GM12878 (cell line): ENCODE measurements at regions of chrX and their contacts with region 1.

Region 1: GRCh38 chrX:93538575-93538974 is 134.8 kb downstream of the NAP1L3 start:
- DNase-seq: no peak
- ATAC-seq: no peak
- H3K4me3 ChIP-seq: no peak overlapping the region
- H3K27ac ChIP-seq: no peak overlapping the region
- H3K4me1 ChIP-seq: no peaks in the 10 kb centered on the region
- H3K27me3 ChIP-seq: no peaks in the 10 kb centered on the region
- CTCF ChIP-seq: peak in 1 of 3 experiments; percentile 12; a peak in 1 of 6 replicates
- EP300 ChIP-seq: no peak
- POLR2A ChIP-seq: no peak
- RAD21 ChIP-seq: peak; percentile 47

Region 2: DNA sequence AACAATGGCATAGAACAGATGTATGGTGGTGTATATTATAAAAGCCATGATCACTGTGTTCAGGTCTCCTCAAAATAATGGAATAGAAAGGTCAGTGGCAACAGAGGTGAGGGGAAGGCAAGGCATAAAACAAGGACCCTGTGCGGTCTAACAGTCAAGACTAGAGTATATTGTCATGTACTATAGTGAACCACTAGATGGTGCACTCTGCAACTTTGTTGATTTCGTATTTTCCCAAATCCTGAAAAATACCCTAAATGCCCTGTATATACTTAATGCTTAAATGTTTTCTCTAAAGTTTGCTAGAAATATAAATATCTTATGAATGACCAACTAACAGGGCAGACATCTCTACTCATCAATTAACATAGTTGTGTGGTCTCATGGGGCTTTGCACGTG is 1306.4 kb before region 1 on chrX:
- CTCF ChIA-PET with region 1: interaction called, 4 read pairs
- POLR2A ChIA-PET with region 1: no interaction called
- RAD21 ChIA-PET with region 1: no interaction called
- SMC1A ChIA-PET with region 1: no interaction called
- in situ Hi-C with region 1: no loop called
- intact Hi-C with region 1: loop called (anchors 5 kb)
- DNase-seq: no peak
- ATAC-seq: peak; percentile 56
- H3K4me3 ChIP-seq: no peak overlapping the region
- H3K27ac ChIP-seq: no peak overlapping the region
- H3K4me1 ChIP-seq: no peaks in the 10 kb centered on the region
- H3K27me3 ChIP-seq: no peaks in the 10 kb centered on the region
- CTCF ChIP-seq: peak in 2 of 3 experiments; percentile 19 to 24; a peak in 3 of 6 replicates
- EP300 ChIP-seq: no peak
- POLR2A ChIP-seq: no peak
- RAD21 ChIP-seq: 0 out of 2 replicates have a peak, but pooled peaks have one; percentile 12

Region 3: DNA sequence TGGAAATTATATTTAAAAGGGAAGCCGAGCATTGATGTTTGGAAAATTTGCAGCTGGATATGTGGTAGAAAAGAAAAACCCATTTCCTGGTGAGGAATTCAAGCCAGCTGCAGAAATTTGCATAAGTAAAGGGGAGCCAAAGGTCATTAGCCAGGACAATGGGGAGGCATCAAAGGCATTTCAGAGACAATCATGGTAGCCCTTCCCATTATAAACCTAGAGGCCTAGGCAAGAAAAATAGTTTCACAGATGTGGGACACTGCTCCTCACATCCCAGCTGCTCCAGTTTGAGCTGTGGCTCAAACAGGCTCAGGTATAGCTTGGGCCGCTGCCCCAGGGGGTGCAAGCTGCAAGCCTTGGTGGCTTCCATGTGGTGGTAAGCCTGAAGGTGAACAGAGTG is 99.0 kb after region 1 on chrX:
- CTCF ChIA-PET with region 1: no interaction called
- POLR2A ChIA-PET with region 1: no interaction called
- RAD21 ChIA-PET with region 1: no interaction called
- SMC1A ChIA-PET with region 1: no interaction called
- in situ Hi-C with region 1: no loop called
- intact Hi-C with region 1: no loop called
- DNase-seq: no peak
- ATAC-seq: no peak
- H3K4me3 ChIP-seq: no peak overlapping the region
- H3K27ac ChIP-seq: no peak overlapping the region
- H3K4me1 ChIP-seq: no peaks in the 10 kb centered on the region
- H3K27me3 ChIP-seq: no peaks in the 10 kb centered on the region
- CTCF ChIP-seq: no peak
- EP300 ChIP-seq: no peak
- POLR2A ChIP-seq: no peak
- RAD21 ChIP-seq: no peak